Ascending aorta (tissue), 2 donors: ENCODE measurements at regions of chr15 and their contacts with region 1.

Region 1: GRCh38 chr15:63933522-63933921 is 99.8 kb upstream of the HERC1 start:
- DNase-seq: peak in 1 of 2 donors; percentile 4
- H3K4me3 ChIP-seq: no peak overlapping the region
- H3K27ac ChIP-seq: no peak overlapping the region
- H3K4me1 ChIP-seq: peaks cover 3 to 4% of the 10 kb centered on the region in 2 donors
- H3K27me3 ChIP-seq: no peaks in the 10 kb centered on the region
- CTCF ChIP-seq: no peak

Region 2: DNA sequence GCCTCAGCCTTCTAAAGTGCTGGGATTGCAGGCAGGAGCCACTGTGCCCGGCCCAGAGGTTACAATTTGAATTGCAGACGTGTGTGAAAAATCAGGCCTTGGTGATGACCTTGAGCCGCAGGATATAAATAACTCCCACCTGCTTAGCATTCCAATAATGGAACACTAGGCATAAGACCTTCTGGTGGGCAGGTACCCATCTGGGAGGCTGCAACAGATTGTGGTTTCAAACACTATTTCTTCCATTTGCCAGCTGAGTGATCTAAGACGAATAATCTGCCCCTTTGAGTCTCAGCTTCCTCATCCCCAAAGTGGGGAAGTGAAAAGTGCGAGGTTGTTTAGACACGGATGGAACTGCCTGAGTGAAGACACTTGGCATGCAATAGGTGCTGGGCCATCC is 52.1 kb before region 1 on chr15:
- intact Hi-C with region 1: loop called (anchors 5 kb)
- DNase-seq: no peak
- H3K4me3 ChIP-seq: no peak overlapping the region
- H3K27ac ChIP-seq: no peak overlapping the region
- H3K4me1 ChIP-seq: no peaks in the 10 kb centered on the region
- H3K27me3 ChIP-seq: no peaks in the 10 kb centered on the region
- CTCF ChIP-seq: no peak